IMR-90 (cell line): ENCODE measurements at regions of chr9 and their contacts with region 1.

Region 1: DNA sequence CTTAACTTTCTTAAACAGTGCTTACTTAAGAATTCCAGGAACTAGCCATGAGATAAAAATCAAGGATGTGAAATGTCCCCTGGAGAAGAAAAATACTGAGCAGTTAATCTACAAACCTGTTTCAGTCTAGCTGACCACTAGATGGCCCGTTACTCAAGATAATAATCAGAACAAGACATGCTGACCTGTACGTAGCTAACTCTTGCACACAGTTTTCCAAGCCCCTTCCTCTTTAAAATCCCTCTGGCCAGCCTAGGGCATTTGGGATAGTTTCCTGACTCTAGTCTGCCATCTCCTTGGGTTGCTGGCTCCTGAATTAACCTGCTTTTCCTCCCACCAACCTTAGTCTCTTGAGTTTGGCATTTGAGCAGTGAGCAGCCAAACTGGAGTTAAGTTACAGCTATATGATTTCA is 59.2 kb upstream of the TRAF1 start:
- DNase-seq: peak; percentile 79
- ATAC-seq: peak; percentile 86
- H3K4me3 ChIP-seq: no peak overlapping the region
- H3K27ac ChIP-seq: no peak overlapping the region
- H3K4me1 ChIP-seq: peaks cover 6% of the 10 kb centered on the region
- H3K27me3 ChIP-seq: no peaks in the 10 kb centered on the region
- CTCF ChIP-seq: peak; percentile 75
- POLR2A ChIP-seq: no peak
- RAD21 ChIP-seq: peak; percentile 66

Region 2: DNA sequence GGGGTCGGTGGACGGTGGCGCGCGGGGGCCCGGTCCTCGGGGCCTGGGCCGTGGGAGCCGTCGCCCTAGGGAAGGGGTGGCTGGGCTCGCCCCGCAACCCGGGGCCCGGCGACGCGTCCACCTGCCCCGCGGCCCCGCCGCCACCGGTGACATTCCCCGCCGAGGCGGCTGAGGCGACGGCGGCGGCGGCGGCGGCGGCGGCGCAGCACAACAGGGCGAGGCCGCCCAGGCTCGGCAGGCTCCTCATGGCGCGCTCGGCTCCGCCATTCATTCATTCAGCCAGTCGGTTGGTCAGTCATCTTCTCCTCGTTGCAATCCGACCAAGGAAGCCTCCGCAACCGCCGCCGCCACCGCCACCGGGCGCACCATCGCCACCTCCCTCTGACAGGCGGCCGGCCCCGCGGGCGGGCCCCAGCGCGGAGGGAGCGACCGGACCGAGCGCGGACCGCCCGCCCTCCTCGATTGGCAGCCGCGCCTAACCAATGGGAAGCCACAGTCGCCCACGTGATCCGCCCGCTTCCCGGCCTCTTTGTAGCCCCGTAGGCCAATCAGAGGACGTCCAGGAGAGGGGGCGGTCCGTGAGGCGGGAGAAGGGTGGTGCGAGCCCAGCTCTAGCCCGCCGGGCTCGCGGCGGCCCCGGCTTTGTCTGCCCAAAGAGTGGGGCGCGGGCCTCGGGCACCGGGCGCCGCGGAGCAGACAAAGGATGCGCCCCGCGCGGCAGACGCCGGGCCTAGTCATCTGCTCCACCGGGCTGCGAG is 271.5 kb before region 1 on chr9 and contains the start of gene MEGF9:
- CTCF ChIA-PET with region 1: no interaction called
- POLR2A ChIA-PET with region 1: no interaction called
- dilution Hi-C with region 1: no loop called
- in situ Hi-C with region 1: no loop called
- intact Hi-C with region 1: no loop called
- DNase-seq: peak; percentile 97
- ATAC-seq: peak; percentile 96
- H3K4me3 ChIP-seq: peak within 1 kb of the TSS; percentile 75
- H3K27ac ChIP-seq: peak within 1 kb of the TSS; percentile 84
- H3K4me1 ChIP-seq: peaks cover 10% of the 10 kb centered on the region
- H3K27me3 ChIP-seq: no peaks in the 10 kb centered on the region
- CTCF ChIP-seq: no peak
- POLR2A ChIP-seq: peak; percentile 67
- RAD21 ChIP-seq: no peak
- total RNA-seq, gene MEGF9: 3.4 and 4.7 TPM in 2 replicates

Region 3: GRCh38 chr9:120875954-120876841 is 109.6 kb before region 1 on chr9:
- CTCF ChIA-PET with region 1: no interaction called
- POLR2A ChIA-PET with region 1: no interaction called
- dilution Hi-C with region 1: no loop called
- in situ Hi-C with region 1: no loop called
- intact Hi-C with region 1: loop called (anchors 2 kb)
- DNase-seq: peak; percentile 85
- ATAC-seq: peak; percentile 72
- H3K4me3 ChIP-seq: peak overlapping the region; percentile 59
- H3K27ac ChIP-seq: peak overlapping the region; percentile 76
- H3K4me1 ChIP-seq: peaks cover 15% of the 10 kb centered on the region
- H3K27me3 ChIP-seq: no peaks in the 10 kb centered on the region
- CTCF ChIP-seq: no peak
- POLR2A ChIP-seq: no peak; the same call in 1 of the 2 replicates
- RAD21 ChIP-seq: no peak

Region 4: GRCh38 chr9:121059998-121060636 is 74.3 kb after region 1 on chr9:
- CTCF ChIA-PET with region 1: interaction called, 25 read pairs
- POLR2A ChIA-PET with region 1: no interaction called
- dilution Hi-C with region 1: no loop called
- in situ Hi-C with region 1: loop called (anchors 5 kb)
- intact Hi-C with region 1: loop called (anchors 1 kb)
- DNase-seq: peak; percentile 84
- ATAC-seq: peak; percentile 80
- H3K4me3 ChIP-seq: no peak overlapping the region
- H3K27ac ChIP-seq: no peak overlapping the region
- H3K4me1 ChIP-seq: peaks cover 1% of the 10 kb centered on the region; the same call in 1 of the 2 replicates
- H3K27me3 ChIP-seq: no peaks in the 10 kb centered on the region
- CTCF ChIP-seq: peak; percentile 74
- POLR2A ChIP-seq: no peak
- RAD21 ChIP-seq: peak; percentile 65

Region 5: GRCh38 chr9:121067640-121068039 is 81.8 kb after region 1 on chr9:
- CTCF ChIA-PET with region 1: interaction called, 4 read pairs
- POLR2A ChIA-PET with region 1: no interaction called
- dilution Hi-C with region 1: no loop called
- in situ Hi-C with region 1: loop called (anchors 5 kb)
- intact Hi-C with region 1: no loop called
- DNase-seq: no peak
- ATAC-seq: no peak
- H3K4me3 ChIP-seq: no peak overlapping the region
- H3K27ac ChIP-seq: no peak overlapping the region
- H3K4me1 ChIP-seq: no peaks in the 10 kb centered on the region
- H3K27me3 ChIP-seq: no peaks in the 10 kb centered on the region
- CTCF ChIP-seq: no peak
- POLR2A ChIP-seq: no peak
- RAD21 ChIP-seq: no peak

Region 6: GRCh38 chr9:121196389-121196788 is 210.6 kb after region 1 on chr9:
- CTCF ChIA-PET with region 1: no interaction called
- POLR2A ChIA-PET with region 1: no interaction called
- dilution Hi-C with region 1: no loop called
- in situ Hi-C with region 1: no loop called
- intact Hi-C with region 1: loop called (anchors 5 kb)
- DNase-seq: no peak
- ATAC-seq: no peak
- H3K4me3 ChIP-seq: no peak overlapping the region
- H3K27ac ChIP-seq: no peak overlapping the region
- H3K4me1 ChIP-seq: peaks cover 8% of the 10 kb centered on the region
- H3K27me3 ChIP-seq: no peaks in the 10 kb centered on the region
- CTCF ChIP-seq: no peak
- POLR2A ChIP-seq: no peak
- RAD21 ChIP-seq: no peak

Region 7: DNA sequence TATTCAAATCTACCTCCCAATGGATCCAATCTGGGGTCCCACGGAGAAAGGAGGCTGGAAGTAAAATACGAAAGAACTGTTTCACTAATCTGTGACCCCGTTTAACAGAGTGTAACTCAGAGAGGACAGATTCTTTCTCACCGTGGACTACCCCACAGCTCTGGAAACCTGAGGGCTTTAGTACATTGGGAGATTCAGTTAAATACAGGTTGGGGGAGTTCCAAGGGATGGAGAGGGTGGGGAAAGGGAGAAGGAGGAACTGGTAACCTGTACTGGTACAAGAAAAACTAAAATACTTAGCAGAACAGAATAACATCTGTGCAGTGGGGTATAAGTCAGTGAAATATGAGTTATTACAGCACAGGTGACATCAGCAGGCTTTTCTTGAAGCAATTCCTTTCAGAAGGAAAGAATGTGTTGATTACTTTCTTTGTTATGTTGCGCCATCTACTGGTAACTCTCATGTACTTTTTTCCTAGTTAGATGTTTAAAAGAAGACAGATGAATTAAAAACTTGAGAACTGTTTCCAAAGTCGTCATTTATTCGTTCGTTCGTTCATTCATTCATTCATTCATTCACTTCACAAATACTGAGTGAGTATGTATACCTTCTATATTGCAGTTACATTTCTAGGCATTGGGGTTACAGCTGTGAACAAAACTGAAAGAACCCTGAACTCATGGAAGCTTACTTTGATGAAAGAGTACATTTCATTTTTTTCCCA is 414.2 kb after region 1 on chr9:
- CTCF ChIA-PET with region 1: interaction called, 3 read pairs
- POLR2A ChIA-PET with region 1: no interaction called
- dilution Hi-C with region 1: no loop called
- in situ Hi-C with region 1: loop called (anchors 25 kb)
- intact Hi-C with region 1: loop called (anchors 10 kb)
- DNase-seq: peak; percentile 86
- ATAC-seq: peak; percentile 27
- H3K4me3 ChIP-seq: no peak overlapping the region
- H3K27ac ChIP-seq: no peak overlapping the region
- H3K4me1 ChIP-seq: peaks cover 11% of the 10 kb centered on the region
- H3K27me3 ChIP-seq: no peaks in the 10 kb centered on the region
- CTCF ChIP-seq: peak; percentile 81
- POLR2A ChIP-seq: no peak
- RAD21 ChIP-seq: peak; percentile 84